ENCODE measurements at regions of chr1 and their contacts with region 1.

Region 1: DNA sequence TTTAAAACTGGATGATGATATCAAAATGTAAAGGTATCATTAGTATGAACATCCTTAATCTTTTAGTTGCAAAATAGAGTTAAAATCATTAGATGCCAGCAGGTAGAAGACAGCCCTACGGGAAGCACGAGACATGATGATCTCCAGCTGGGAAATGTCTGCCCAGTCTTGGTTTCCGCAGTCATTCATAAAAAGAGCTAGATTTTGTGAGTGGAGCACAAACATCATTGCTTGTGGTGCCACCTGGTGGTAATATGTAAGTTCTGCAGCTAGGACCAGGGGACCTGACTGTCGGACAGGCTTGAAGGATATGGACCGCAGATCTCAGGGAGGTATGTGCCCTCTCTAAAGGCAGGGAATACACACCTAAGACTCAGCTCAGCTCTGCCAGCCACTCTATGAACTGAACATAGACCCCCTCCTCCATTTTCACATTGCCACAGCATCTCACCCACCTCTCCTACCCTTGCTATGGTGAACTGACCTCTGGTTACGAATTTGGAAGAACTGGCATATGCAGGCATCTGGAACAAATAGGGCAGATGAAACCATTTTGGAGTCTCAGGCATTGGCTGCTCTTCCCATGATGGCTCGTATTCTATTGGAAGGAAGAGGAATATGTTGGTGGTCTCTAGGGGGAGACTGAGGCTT is 9.2 kb downstream of the FCMR start:
- DNase-seq: peak in 1 of 2 experiments; percentile 67
- H3K4me3 ChIP-seq: no peak overlapping the region
- H3K27ac ChIP-seq: no peak overlapping the region
- H3K4me1 ChIP-seq: peaks cover 0 to 7% (median under 1%) of the 10 kb centered on the region in 4 experiments; a peak in 2 of 7 replicates
- H3K27me3 ChIP-seq: peaks cover 8 to 30% (median 27%) of the 10 kb centered on the region in 4 experiments
- CTCF ChIP-seq: peak; percentile 69 to 90 (median 87)
- EP300 ChIP-seq: no peak
- POLR2A ChIP-seq: no peak
- RAD21 ChIP-seq: peak; percentile 80 to 87

Region 2: GRCh38 chr1:206663832-206664652 is 248.5 kb before region 1 on chr1:
- CTCF ChIA-PET with region 1: interaction called, 13 read pairs
- POLR2A ChIA-PET with region 1: no interaction called
- DNase-seq: peak in 1 of 2 experiments; percentile 92
- H3K4me3 ChIP-seq: peak overlapping the region; percentile 11 to 54 (median 25); a peak in 7 of 8 replicates
- H3K27ac ChIP-seq: no peak overlapping the region
- H3K4me1 ChIP-seq: peaks cover 0 to 5% (median 1%) of the 10 kb centered on the region in 4 experiments; a peak in 4 of 7 replicates
- H3K27me3 ChIP-seq: peaks cover 0 to 10% (median 3%) of the 10 kb centered on the region in 4 experiments; a peak in 5 of 7 replicates
- CTCF ChIP-seq: peak; percentile 72 to 91 (median 87)
- EP300 ChIP-seq: no peak
- POLR2A ChIP-seq: no peak
- RAD21 ChIP-seq: peak; percentile 88 to 94

Region 3: DNA sequence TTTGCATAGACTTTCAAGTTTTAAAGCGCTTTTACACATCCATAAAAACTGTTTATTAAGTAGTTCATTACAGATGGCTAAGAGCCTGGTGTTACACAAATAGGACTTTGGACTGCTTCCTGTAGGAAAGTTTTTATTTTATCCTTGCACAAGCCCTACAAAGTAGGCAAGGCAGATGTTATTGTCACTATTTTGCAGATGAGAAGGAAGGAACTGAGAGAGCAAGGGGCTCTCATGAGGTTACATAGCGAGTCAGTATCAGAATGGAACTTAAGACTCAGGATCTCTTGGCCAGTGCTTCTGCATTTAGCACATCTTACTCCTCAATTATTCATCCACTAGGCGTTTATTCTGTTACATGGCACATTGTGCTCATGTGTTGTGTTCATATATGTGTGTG is 230.5 kb before region 1 on chr1:
- CTCF ChIA-PET with region 1: no interaction called
- POLR2A ChIA-PET with region 1: no interaction called
- DNase-seq: no peak
- H3K4me3 ChIP-seq: no peak overlapping the region
- H3K27ac ChIP-seq: no peak overlapping the region
- H3K4me1 ChIP-seq: peaks cover 0 to 6% (median 0%) of the 10 kb centered on the region in 4 experiments; a peak in 3 of 7 replicates
- H3K27me3 ChIP-seq: peaks cover 9 to 31% (median 25%) of the 10 kb centered on the region in 4 experiments
- CTCF ChIP-seq: no peak
- EP300 ChIP-seq: no peak
- POLR2A ChIP-seq: no peak
- RAD21 ChIP-seq: no peak

Region 4: GRCh38 chr1:206761159-206761768 is 151.3 kb before region 1 on chr1:
- CTCF ChIA-PET with region 1: interaction called, 14 read pairs
- POLR2A ChIA-PET with region 1: no interaction called
- DNase-seq: no peak
- H3K4me3 ChIP-seq: no peak overlapping the region
- H3K27ac ChIP-seq: no peak overlapping the region
- H3K4me1 ChIP-seq: no peaks in the 10 kb centered on the region
- H3K27me3 ChIP-seq: no peaks in the 10 kb centered on the region; a peak in 1 of 7 replicates
- CTCF ChIP-seq: peak in 1 of 3 experiments; percentile 39; a peak in 2 of 4 replicates
- EP300 ChIP-seq: no peak
- POLR2A ChIP-seq: no peak
- RAD21 ChIP-seq: no peak

Region 5: GRCh38 chr1:206808615-206809014 is 104.0 kb before region 1 on chr1:
- CTCF ChIA-PET with region 1: interaction called, 57 read pairs
- POLR2A ChIA-PET with region 1: no interaction called
- DNase-seq: no peak
- H3K4me3 ChIP-seq: no peak overlapping the region
- H3K27ac ChIP-seq: no peak overlapping the region
- H3K4me1 ChIP-seq: no peaks in the 10 kb centered on the region
- H3K27me3 ChIP-seq: no peaks in the 10 kb centered on the region
- CTCF ChIP-seq: peak; percentile 6 to 53 (median 44)
- EP300 ChIP-seq: no peak
- POLR2A ChIP-seq: no peak
- RAD21 ChIP-seq: peak; percentile 62 to 73

Region 6: GRCh38 chr1:206872139-206872538 is 40.4 kb before region 1 on chr1:
- CTCF ChIA-PET with region 1: interaction called, 49 read pairs
- POLR2A ChIA-PET with region 1: no interaction called
- DNase-seq: no peak
- H3K4me3 ChIP-seq: no peak overlapping the region
- H3K27ac ChIP-seq: no peak overlapping the region
- H3K4me1 ChIP-seq: no peaks in the 10 kb centered on the region
- H3K27me3 ChIP-seq: no peaks in the 10 kb centered on the region; a peak in 1 of 7 replicates
- CTCF ChIP-seq: no peak
- EP300 ChIP-seq: no peak
- POLR2A ChIP-seq: no peak
- RAD21 ChIP-seq: no peak

Region 7: GRCh38 chr1:206925106-206925736 is 12.7 kb after region 1 on chr1:
- CTCF ChIA-PET with region 1: interaction called, 180 read pairs
- POLR2A ChIA-PET with region 1: interaction called, 3 read pairs
- DNase-seq: no peak
- H3K4me3 ChIP-seq: no peak overlapping the region
- H3K27ac ChIP-seq: no peak overlapping the region
- H3K4me1 ChIP-seq: no peaks in the 10 kb centered on the region
- H3K27me3 ChIP-seq: peaks cover 0 to 2% (median 0%) of the 10 kb centered on the region in 4 experiments; a peak in 1 of 7 replicates
- CTCF ChIP-seq: peak; percentile 24 to 39 (median 37); a peak in 2 of 4 replicates
- EP300 ChIP-seq: no peak
- POLR2A ChIP-seq: no peak
- RAD21 ChIP-seq: peak in 1 of 2 experiments; percentile 35; a peak in 1 of 4 replicates